Ascending aorta (tissue), 2 donors: ENCODE measurements at regions of chr15 and their contacts with region 1.

Region 1: GRCh38 chr15:63041974-63042819 is at the start of gene TPM1:
- DNase-seq: peak; percentile 62 to 95
- H3K4me3 ChIP-seq: peak within 1 kb of the TSS; percentile 76 to 85
- H3K27ac ChIP-seq: peak within 1 kb of the TSS; percentile 86 to 98
- H3K4me1 ChIP-seq: peaks cover 0 to 14% of the 10 kb centered on the region in 2 donors
- H3K27me3 ChIP-seq: no peaks in the 10 kb centered on the region
- CTCF ChIP-seq: peak in 1 of 3 experiments; percentile 34
- total RNA-seq, gene TPM1: 813 TPM

Region 2: DNA sequence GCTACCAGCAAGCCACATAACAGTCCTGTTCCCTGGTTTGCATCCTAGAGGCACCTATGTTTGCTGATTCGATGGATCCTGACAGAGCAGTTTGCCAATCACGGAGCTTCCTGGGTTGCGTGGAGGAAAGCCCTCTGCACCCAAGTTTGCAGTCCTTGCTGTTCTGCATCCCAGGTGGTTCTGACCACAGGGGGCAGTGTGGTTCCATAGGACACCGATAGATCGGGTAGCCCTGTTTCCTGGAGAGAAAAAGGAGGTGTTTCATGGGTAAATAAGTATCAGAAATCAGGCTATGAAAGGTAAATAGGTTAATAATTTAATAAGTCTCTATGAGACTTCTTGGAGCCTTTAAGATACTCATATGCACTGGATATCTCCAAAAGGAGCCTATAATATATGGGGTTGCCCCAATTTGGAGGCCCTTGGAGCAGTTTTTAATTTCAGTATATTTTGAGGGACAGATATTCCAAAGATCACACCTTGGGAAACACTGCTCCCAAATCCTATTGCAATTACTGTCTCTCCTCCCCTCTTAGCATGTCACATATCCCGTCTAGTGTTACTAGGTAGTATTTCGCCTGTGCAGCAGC is 194.2 kb before region 1 on chr15:
- intact Hi-C with region 1: loop called (anchors 5 kb)
- DNase-seq: peak in 1 of 2 donors; percentile 85
- H3K4me3 ChIP-seq: no peak overlapping the region
- H3K27ac ChIP-seq: no peak overlapping the region
- H3K4me1 ChIP-seq: peaks cover 0 to 13% of the 10 kb centered on the region in 2 donors
- H3K27me3 ChIP-seq: no peaks in the 10 kb centered on the region
- CTCF ChIP-seq: peak; percentile 67 to 85 (median 78)

Region 3: GRCh38 chr15:62928242-62928995 is 113.8 kb before region 1 on chr15:
- intact Hi-C with region 1: loop called (anchors 2 kb)
- DNase-seq: peak in 1 of 2 donors; percentile 81
- H3K4me3 ChIP-seq: no peak overlapping the region
- H3K27ac ChIP-seq: peak overlapping the region; percentile 61 to 69
- H3K4me1 ChIP-seq: peaks cover 7 to 16% of the 10 kb centered on the region in 2 donors
- H3K27me3 ChIP-seq: no peaks in the 10 kb centered on the region
- CTCF ChIP-seq: peak; percentile 16 to 29 (median 24)

Region 4: DNA sequence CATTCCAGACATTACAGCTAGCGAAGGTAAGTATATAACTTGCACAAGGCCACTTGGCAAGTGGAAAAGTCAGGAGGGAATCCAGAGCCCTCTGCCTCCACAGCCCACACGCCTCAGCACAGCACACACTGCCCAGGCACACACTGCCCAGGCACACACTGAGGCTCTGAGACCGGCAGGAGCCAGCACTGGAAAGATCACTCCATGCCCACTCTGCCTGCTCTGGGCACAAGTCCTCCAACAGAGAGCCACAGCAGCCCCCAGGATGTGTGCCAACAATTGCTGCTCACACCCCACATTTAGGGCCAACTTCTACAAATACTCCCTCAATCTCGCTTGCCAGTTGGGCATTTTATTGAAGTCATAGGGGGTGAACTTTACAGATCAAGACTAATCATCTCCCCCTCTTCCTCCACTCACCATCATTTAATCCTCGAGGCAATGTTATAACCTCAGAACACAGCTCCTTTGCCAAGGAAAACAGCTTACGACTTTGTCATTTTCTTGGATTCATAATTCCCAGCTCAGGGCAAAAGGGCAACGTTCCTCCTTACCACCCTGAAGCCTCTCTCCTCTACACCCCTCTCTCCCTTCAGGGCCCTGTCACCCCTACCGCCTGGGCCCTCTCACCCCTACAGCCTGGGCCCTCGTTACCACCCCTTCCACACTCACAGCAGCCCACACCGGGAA is 52.7 kb before region 1 on chr15:
- intact Hi-C with region 1: loop called (anchors 5 kb)
- DNase-seq: no peak
- H3K4me3 ChIP-seq: no peak overlapping the region
- H3K27ac ChIP-seq: peak overlapping the region; percentile 35 to 60
- H3K4me1 ChIP-seq: peaks cover 0 to 6% of the 10 kb centered on the region in 2 donors
- H3K27me3 ChIP-seq: no peaks in the 10 kb centered on the region
- CTCF ChIP-seq: no peak

Region 5: DNA sequence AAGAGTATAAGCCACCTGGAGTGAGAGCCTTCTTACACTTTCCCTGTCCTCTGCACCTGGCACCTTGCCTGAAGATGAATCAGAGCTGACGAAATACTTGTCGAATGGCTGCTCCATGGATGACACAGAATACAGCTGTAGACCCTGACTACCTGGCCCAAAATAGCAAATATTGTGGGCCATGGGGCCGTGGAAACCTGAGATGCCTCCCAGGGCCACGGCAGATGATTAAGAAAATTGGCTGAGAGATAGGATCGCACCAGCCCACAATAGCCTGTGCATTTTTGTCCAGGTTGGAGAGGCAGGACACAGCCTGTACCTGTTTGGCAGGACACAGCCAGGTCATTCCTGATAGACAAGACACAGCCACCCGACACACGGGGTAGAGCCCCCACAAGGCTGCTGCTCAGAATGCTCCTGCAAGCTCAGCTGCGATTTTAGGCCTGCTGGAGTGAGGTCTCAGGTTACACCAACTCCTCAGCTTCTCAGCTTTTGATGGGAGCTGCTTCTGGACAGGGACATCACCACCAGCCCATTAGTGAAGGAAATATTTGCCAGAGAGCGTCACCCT is 22.6 kb before region 1 on chr15:
- intact Hi-C with region 1: loop called (anchors 2 kb)
- DNase-seq: no peak
- H3K4me3 ChIP-seq: no peak overlapping the region
- H3K27ac ChIP-seq: no peak overlapping the region
- H3K4me1 ChIP-seq: peaks cover 6 to 32% of the 10 kb centered on the region in 2 donors
- H3K27me3 ChIP-seq: no peaks in the 10 kb centered on the region
- CTCF ChIP-seq: no peak